A549 (cell line): ENCODE measurements at regions of chr15 and their contacts with region 1.

Region 1: DNA sequence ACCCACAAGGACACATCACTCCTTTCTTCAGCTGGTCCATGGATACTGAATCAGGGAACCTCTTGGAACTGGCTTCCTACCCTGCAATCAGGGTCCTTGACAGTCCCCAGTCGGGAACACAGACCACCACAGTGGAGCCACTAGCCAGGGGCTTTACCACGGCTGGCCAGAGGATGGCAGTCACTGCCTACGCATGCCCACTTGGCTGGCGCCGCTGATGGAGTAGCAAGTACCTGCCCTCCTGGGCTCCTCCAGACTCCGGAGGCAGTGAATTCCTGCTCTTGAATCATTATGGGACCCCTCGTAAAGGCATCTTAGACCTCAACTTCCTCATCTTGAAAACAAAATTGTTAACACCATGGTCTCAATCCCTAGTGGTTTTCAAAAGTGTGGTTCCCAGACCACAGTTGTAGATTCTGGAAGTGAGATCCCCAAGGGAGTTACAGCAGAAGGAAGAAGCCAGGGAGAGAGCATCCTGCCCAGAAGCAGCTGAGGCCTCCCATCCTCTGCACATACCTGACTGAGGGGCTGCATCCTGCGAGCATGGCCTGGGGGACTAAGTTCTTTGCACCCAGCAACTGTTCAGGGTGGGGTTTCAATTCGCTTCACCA is 9.1 kb upstream of the SKIC8 start:
- DNase-seq: peak; percentile 77 to 87
- ATAC-seq: peak; percentile 85 to 95
- H3K4me3 ChIP-seq: no peak overlapping the region
- H3K27ac ChIP-seq: 0 out of 6 replicates have a peak overlapping the region, but pooled peaks of 1 of the 2 experiments have one; percentile 17
- H3K4me1 ChIP-seq: peaks cover 5% of the 10 kb centered on the region; the same call in 2 of the 3 replicates
- CTCF ChIP-seq: peak; percentile 98
- EP300 ChIP-seq: no peak
- POLR2A ChIP-seq: no peak
- RAD21 ChIP-seq: peak; percentile 98

Region 2: GRCh38 chr15:78170848-78171773 is 137.4 kb before region 1 on chr15:
- CTCF ChIA-PET with region 1: no interaction called
- POLR2A ChIA-PET with region 1: no interaction called
- DNase-seq: no peak
- ATAC-seq: no peak
- H3K4me3 ChIP-seq: no peak overlapping the region
- H3K27ac ChIP-seq: no peak overlapping the region
- H3K4me1 ChIP-seq: no peaks in the 10 kb centered on the region
- CTCF ChIP-seq: no peak
- EP300 ChIP-seq: no peak
- POLR2A ChIP-seq: no peak
- RAD21 ChIP-seq: no peak

Region 3: DNA sequence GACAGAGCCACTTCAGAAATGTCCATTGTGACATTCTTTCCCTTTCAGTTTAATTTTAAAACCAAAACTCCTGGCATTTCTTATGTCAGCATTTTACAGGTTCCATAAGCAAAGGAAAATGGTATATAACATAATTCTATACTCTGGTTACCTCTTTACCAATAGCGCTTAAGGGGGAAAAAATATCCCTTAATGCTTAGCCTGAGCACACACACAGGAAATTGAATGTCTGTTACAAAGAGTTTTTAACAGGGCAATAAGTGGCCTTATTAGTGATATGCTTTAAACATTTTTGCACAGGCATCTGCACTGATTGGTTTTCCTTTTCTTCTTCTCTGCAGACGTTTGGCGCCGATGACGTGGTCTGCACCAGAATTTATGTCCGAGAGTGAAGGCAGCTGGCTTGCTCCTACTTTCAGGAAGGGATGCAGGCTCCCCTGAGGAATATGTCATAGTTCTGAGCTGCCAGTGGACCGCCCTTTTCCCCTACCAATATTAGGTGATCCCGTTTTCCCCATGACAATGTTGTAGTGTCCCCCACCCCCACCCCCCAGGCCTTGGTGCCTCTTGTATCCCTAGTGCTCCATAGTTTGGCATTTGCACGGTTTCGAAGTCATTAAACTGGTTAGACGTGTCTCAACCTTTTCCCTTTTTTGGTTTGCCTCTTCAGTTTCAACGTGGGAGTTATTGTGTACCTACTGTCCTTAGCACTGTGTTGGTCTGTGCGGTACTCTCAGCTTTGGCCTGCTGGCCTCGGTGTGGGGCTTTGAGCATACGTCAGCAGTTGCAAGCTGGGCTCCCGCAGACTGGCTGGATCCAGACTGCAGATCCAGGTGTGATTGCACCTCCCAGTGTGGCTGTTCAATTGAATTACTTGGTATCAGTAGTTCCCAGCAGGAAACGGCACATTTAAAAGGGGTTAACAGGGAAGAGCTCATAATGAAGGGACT is 39.3 kb after region 1 on chr15:
- CTCF ChIA-PET with region 1: interaction called, 14 read pairs
- POLR2A ChIA-PET with region 1: no interaction called
- DNase-seq: no peak
- ATAC-seq: no peak
- H3K4me3 ChIP-seq: no peak overlapping the region
- H3K27ac ChIP-seq: no peak overlapping the region
- H3K4me1 ChIP-seq: no peaks in the 10 kb centered on the region
- CTCF ChIP-seq: no peak
- EP300 ChIP-seq: no peak
- POLR2A ChIP-seq: no peak
- RAD21 ChIP-seq: no peak

Region 4: GRCh38 chr15:78407608-78408354 is 99.3 kb after region 1 on chr15:
- CTCF ChIA-PET with region 1: interaction called, 571 read pairs
- POLR2A ChIA-PET with region 1: no interaction called
- DNase-seq: no peak
- ATAC-seq: 0 out of 6 replicates have a peak, but pooled peaks of 1 of the 2 experiments have one; percentile 17
- H3K4me3 ChIP-seq: no peak overlapping the region
- H3K27ac ChIP-seq: no peak overlapping the region
- H3K4me1 ChIP-seq: no peaks in the 10 kb centered on the region
- CTCF ChIP-seq: no peak
- EP300 ChIP-seq: no peak
- POLR2A ChIP-seq: no peak
- RAD21 ChIP-seq: no peak

Region 5: GRCh38 chr15:78429477-78429876 is 121.0 kb after region 1 on chr15:
- CTCF ChIA-PET with region 1: interaction called, 571 read pairs
- POLR2A ChIA-PET with region 1: no interaction called
- DNase-seq: no peak
- ATAC-seq: no peak
- H3K4me3 ChIP-seq: no peak overlapping the region
- H3K27ac ChIP-seq: no peak overlapping the region
- H3K4me1 ChIP-seq: no peaks in the 10 kb centered on the region
- CTCF ChIP-seq: no peak
- EP300 ChIP-seq: no peak
- POLR2A ChIP-seq: no peak
- RAD21 ChIP-seq: no peak

Region 6: GRCh38 chr15:78492872-78493271 is 184.3 kb after region 1 on chr15:
- CTCF ChIA-PET with region 1: interaction called, 13 read pairs
- POLR2A ChIA-PET with region 1: no interaction called
- DNase-seq: no peak
- ATAC-seq: no peak
- H3K4me3 ChIP-seq: no peak overlapping the region
- H3K27ac ChIP-seq: no peak overlapping the region
- H3K4me1 ChIP-seq: peaks cover 12% of the 10 kb centered on the region; the same call in 2 of the 3 replicates
- CTCF ChIP-seq: no peak
- EP300 ChIP-seq: no peak
- POLR2A ChIP-seq: no peak
- RAD21 ChIP-seq: no peak

Region 7: GRCh38 chr15:78750566-78750965 is 442.0 kb after region 1 on chr15:
- CTCF ChIA-PET with region 1: interaction called, 23 read pairs
- POLR2A ChIA-PET with region 1: no interaction called
- DNase-seq: no peak
- ATAC-seq: peak; percentile 26 to 40
- H3K4me3 ChIP-seq: peak overlapping the region; percentile 32; the same call in 1 of the 3 replicates
- H3K27ac ChIP-seq: peak overlapping the region; percentile 26 to 60; a peak in 3 of 6 replicates
- H3K4me1 ChIP-seq: peaks cover 15% of the 10 kb centered on the region
- CTCF ChIP-seq: no peak
- EP300 ChIP-seq: no peak
- POLR2A ChIP-seq: no peak
- RAD21 ChIP-seq: no peak